Naive thymus-derived CD4-positive, alpha-beta T cell (primary cell): ENCODE measurements at regions of chr19 and their contacts with region 1.

Region 1: DNA sequence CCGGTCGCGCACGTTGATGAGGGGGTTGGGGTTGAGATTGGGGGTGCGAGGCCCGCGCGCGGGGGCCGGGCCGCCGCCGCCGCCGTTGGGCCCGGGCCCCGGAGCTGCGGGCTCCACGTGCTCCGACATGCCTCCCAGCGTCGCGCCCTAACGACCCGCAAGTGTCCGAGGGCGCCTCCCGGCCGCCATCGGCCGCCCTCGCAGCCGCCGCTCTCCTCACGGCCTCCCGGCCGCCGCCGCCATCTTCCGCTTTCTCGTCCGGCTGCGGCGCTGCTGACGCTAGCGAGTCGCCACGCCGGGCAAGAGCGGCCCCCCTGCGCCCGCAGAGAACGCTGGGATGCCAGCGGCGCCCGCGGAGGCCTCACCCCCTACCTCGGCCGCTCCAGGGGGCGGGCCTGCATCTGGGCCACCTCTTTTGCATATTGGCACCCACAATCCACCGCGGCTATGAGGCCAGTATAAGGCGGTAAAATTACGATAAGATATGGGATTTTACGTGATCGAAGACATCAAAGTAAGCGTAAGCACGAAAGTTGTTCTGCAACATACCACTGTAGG is at the start of gene TMEM259:
- DNase-seq: peak; percentile 92 to 99 (median 97)
- ATAC-seq: peak; percentile 94
- H3K4me3 ChIP-seq: peak within 1 kb of the TSS; percentile 79
- H3K4me3 Mint-ChIP-seq: peak within 1 kb of the TSS; percentile 85 to 98 (median 92)
- H3K27ac ChIP-seq: peak within 1 kb of the TSS; percentile 91
- H3K27ac Mint-ChIP-seq: peak within 1 kb of the TSS; percentile 99 to 100 (median 100)
- H3K4me1 ChIP-seq: peaks cover 26 to 44% of the 10 kb centered on the region in 2 donors
- H3K4me1 Mint-ChIP-seq: peaks cover 9 to 50% (median 33%) of the 10 kb centered on the region in 7 donors
- H3K27me3 ChIP-seq: no peaks in the 10 kb centered on the region
- H3K27me3 Mint-ChIP-seq: peaks cover 0 to 7% (median 0%) of the 10 kb centered on the region in 5 donors
- total RNA-seq, gene TMEM259: 189 to 347 (median 311) TPM

Region 2: DNA sequence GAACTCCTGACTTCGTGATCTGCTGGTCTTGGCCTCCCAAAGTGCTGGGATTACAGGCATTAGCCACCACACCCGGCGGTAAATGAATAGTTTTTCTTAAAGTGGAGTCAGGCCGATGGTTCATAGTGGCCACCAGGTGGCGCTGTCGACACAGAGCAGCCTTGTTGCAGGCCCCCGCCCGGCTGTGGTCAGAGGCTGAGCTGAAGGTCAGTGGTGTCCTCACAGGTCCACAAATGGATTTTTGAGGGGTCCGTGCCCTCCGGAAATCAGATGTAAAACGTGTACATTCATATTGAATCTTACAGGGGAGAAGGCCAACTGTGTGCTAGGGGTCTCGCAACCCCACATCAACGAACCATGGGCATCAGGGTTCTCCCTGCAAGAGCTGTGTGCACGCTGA is 50.3 kb before region 1 on chr19:
- CTCF ChIA-PET with region 1: no interaction called
- POLR2A ChIA-PET with region 1: no interaction called
- intact Hi-C with region 1: no loop called
- DNase-seq: no peak
- ATAC-seq: no peak
- H3K4me3 ChIP-seq: no peak overlapping the region
- H3K4me3 Mint-ChIP-seq: no peak overlapping the region
- H3K27ac ChIP-seq: no peak overlapping the region
- H3K27ac Mint-ChIP-seq: peak overlapping the region in 4 of 9 donors; percentile 29 to 90 (median 64)
- H3K4me1 ChIP-seq: no peaks in the 10 kb centered on the region
- H3K4me1 Mint-ChIP-seq: no peaks in the 10 kb centered on the region
- H3K27me3 ChIP-seq: no peaks in the 10 kb centered on the region
- H3K27me3 Mint-ChIP-seq: no peaks in the 10 kb centered on the region

Region 3: GRCh38 chr19:984165-984967 is 36.6 kb before region 1 on chr19 and contains the start of gene WDR18:
- CTCF ChIA-PET with region 1: interaction called, 5 read pairs
- POLR2A ChIA-PET with region 1: interaction called, 10 read pairs
- intact Hi-C with region 1: loop called in 1 of 2 experiments (anchors 1 kb)
- DNase-seq: peak; percentile 62 to 93 (median 76)
- ATAC-seq: peak; percentile 93
- H3K4me3 ChIP-seq: peak within 1 kb of the TSS; percentile 56
- H3K4me3 Mint-ChIP-seq: peak within 1 kb of the TSS; percentile 78 to 98 (median 92)
- H3K27ac ChIP-seq: peak within 1 kb of the TSS; percentile 99
- H3K27ac Mint-ChIP-seq: peak within 1 kb of the TSS; percentile 80 to 94 (median 90)
- H3K4me1 ChIP-seq: peaks cover 4 to 17% of the 10 kb centered on the region in 2 donors
- H3K4me1 Mint-ChIP-seq: peaks cover 6 to 21% (median 17%) of the 10 kb centered on the region in 7 donors
- H3K27me3 ChIP-seq: no peaks in the 10 kb centered on the region
- H3K27me3 Mint-ChIP-seq: no peaks in the 10 kb centered on the region
- total RNA-seq, gene WDR18: 20.7 to 63.8 (median 48.5) TPM

Region 4: DNA sequence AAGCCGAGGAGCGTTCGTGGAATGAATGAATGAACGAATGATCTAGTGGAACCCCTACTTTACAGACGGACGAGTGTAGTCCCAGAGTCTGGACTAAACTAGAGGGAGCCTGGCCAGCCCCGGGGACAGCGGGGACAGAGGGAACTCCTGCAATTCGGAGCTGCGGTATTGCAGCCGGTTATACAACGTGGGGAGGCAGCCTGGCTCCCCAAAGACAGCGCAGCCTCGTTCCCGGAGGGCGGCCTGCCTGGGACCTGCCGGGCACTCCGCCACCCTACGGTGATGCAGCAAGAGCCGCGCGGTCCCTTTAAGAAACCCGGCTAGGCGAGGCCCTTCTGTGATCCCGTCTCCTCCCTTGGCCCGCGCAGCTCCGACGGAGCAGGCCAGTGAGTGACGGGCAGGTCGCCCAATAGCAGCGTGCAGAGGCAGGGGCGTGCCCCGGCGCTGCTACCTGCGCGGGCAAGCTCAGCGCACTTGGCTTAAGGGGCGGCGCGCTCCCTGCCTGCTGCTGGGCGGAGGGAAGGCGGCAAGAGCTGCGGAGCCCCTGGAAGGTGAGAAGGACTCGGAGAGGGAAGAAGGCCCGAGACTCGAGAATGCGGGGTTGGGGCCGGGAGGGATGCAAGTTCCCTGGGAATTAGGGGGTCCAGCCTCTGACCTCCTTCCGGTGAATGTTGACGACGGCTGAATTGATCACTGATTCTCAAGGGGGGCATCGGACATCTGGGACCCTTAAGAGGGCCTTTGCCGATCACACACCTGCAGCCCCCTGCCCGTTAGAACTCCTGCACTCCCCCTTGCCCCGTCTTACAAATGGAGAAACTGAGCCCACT is 18.9 kb after region 1 on chr19 and contains the start of gene ABCA7:
- CTCF ChIA-PET with region 1: interaction called, 6 read pairs
- POLR2A ChIA-PET with region 1: interaction called, 342 read pairs
- intact Hi-C with region 1: loop called (anchors 1 kb)
- DNase-seq: peak; percentile 98 to 100 (median 99)
- ATAC-seq: peak; percentile 96
- H3K4me3 ChIP-seq: peak within 1 kb of the TSS; percentile 74
- H3K4me3 Mint-ChIP-seq: peak within 1 kb of the TSS; percentile 95 to 100 (median 98)
- H3K27ac ChIP-seq: peak within 1 kb of the TSS; percentile 74
- H3K27ac Mint-ChIP-seq: peak within 1 kb of the TSS; percentile 79 to 98 (median 95)
- H3K4me1 ChIP-seq: peaks cover 30 to 42% of the 10 kb centered on the region in 2 donors
- H3K4me1 Mint-ChIP-seq: peaks cover 29 to 61% (median 54%) of the 10 kb centered on the region in 7 donors
- H3K27me3 ChIP-seq: no peaks in the 10 kb centered on the region
- H3K27me3 Mint-ChIP-seq: no peaks in the 10 kb centered on the region
- total RNA-seq, gene ABCA7: 57.8 to 323 (median 155) TPM

Region 5: DNA sequence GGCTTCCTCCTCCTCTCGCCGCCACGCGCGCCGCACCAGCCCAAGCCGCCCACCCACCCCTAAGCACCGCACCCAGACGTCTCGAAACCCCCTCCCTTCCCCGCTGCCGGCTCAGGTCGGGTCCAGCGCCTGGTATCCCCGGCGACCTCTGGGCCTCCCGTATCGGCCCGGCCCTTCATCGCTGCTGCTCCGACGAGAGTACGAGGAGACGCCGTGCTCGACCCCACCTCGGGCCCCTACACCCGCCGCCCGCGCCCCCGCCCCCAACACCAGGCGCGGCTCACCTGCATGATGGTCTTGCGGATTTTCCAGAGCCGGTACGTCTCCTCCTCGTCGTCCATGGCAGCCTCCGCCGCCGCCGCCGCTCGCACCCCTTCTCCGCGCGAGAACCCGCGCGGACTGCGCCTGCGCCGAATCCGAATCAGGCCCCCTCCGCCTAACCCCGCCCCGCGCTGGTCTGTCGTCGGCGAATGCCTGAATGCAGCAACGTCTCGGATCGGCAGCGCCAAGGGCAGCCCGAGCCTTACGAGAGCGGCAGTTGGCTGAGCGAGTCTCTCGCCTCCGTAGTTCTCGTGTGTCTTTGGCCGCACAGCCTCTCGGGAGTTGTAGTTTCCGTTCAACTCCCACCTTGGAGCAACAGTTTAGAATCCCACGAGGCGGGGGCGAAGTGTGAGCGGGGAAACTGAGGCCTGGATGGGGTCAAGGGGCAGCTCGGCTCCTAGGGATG is 74.2 kb after region 1 on chr19 and contains the start of gene POLR2E:
- CTCF ChIA-PET with region 1: no interaction called
- POLR2A ChIA-PET with region 1: interaction called, 7 read pairs
- intact Hi-C with region 1: loop called in 1 of 2 experiments (anchors 1 kb)
- DNase-seq: peak; percentile 97 to 99 (median 99)
- ATAC-seq: peak; percentile 98
- H3K4me3 ChIP-seq: peak within 1 kb of the TSS; percentile 68
- H3K4me3 Mint-ChIP-seq: peak within 1 kb of the TSS; percentile 80 to 97 (median 92)
- H3K27ac ChIP-seq: peak within 1 kb of the TSS; percentile 71
- H3K27ac Mint-ChIP-seq: peak within 1 kb of the TSS; percentile 87 to 97 (median 93)
- H3K4me1 ChIP-seq: peaks cover 18 to 23% of the 10 kb centered on the region in 2 donors
- H3K4me1 Mint-ChIP-seq: peaks cover 10 to 59% (median 44%) of the 10 kb centered on the region in 7 donors
- H3K27me3 ChIP-seq: no peaks in the 10 kb centered on the region
- H3K27me3 Mint-ChIP-seq: no peaks in the 10 kb centered on the region
- total RNA-seq, gene POLR2E: 75.3 to 157 (median 82.1) TPM

Region 6: DNA sequence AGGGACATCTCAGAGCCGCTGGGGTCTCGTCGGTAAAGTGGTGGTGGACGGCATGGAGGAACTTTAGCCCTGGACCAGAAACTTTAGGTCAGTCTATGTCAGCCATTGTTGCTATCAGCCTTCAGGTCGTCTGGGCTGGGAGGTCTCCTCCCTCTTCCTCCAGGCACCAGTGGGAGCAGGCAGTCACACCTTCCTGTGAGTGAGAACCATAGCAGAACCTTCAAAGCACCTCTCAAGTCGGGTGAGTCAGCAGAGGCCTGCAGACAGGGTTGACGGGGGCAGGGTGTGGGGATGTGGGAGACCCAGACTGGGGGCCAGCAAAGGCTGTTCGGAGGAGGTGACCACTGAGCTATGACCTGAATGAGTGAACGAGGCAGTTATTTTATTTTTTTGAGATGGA is 168.5 kb after region 1 on chr19:
- CTCF ChIA-PET with region 1: no interaction called
- POLR2A ChIA-PET with region 1: interaction called, 3 read pairs
- intact Hi-C with region 1: loop called in 1 of 2 experiments (anchors 5 kb)
- DNase-seq: peak in 1 of 9 donors; percentile 67
- ATAC-seq: peak; percentile 57
- H3K4me3 ChIP-seq: no peak overlapping the region
- H3K4me3 Mint-ChIP-seq: peak overlapping the region in 5 of 10 donors; percentile 33 to 63 (median 58)
- H3K27ac ChIP-seq: no peak overlapping the region
- H3K27ac Mint-ChIP-seq: peak overlapping the region; percentile 44 to 94 (median 79)
- H3K4me1 ChIP-seq: peaks cover 21 to 25% of the 10 kb centered on the region in 2 donors
- H3K4me1 Mint-ChIP-seq: peaks cover 11 to 27% (median 18%) of the 10 kb centered on the region in 7 donors
- H3K27me3 ChIP-seq: no peaks in the 10 kb centered on the region
- H3K27me3 Mint-ChIP-seq: no peaks in the 10 kb centered on the region

Region 7: GRCh38 chr19:1249298-1249989 is 228.5 kb after region 1 on chr19:
- CTCF ChIA-PET with region 1: no interaction called
- POLR2A ChIA-PET with region 1: no interaction called
- intact Hi-C with region 1: loop called (anchors 1 to 5 kb)
- DNase-seq: peak; percentile 88 to 97 (median 94)
- ATAC-seq: peak; percentile 74
- H3K4me3 ChIP-seq: peak overlapping the region; percentile 63
- H3K4me3 Mint-ChIP-seq: peak overlapping the region; percentile 80 to 95 (median 88)
- H3K27ac ChIP-seq: peak overlapping the region; percentile 94
- H3K27ac Mint-ChIP-seq: peak overlapping the region; percentile 62 to 95 (median 89)
- H3K4me1 ChIP-seq: peaks cover 22 to 27% of the 10 kb centered on the region in 2 donors
- H3K4me1 Mint-ChIP-seq: peaks cover 0 to 11% (median 10%) of the 10 kb centered on the region in 7 donors
- H3K27me3 ChIP-seq: no peaks in the 10 kb centered on the region
- H3K27me3 Mint-ChIP-seq: no peaks in the 10 kb centered on the region